Activated CD8-positive, alpha-beta T cell treated with anti-CD3 and anti-CD28 coated beads, Interleukin-2, amount 10 ng/mL, durations not matched to agents 7 days and 5 days (primary cell): ENCODE measurements at regions of chr7 and their contacts with region 1.

Region 1: GRCh38 chr7:65006094-65006992 is at the start of gene ERV3-1:
- DNase-seq: peak; percentile 97
- ATAC-seq: peak; percentile 100
- H3K4me3 Mint-ChIP-seq: peak within 1 kb of the TSS; percentile 93
- H3K27ac Mint-ChIP-seq: peak within 1 kb of the TSS; percentile 93
- H3K4me1 Mint-ChIP-seq: peaks cover 27% of the 10 kb centered on the region
- H3K27me3 Mint-ChIP-seq: no peaks in the 10 kb centered on the region
- total RNA-seq, gene ERV3-1: 12.5 to 14.8 TPM

Region 2: DNA sequence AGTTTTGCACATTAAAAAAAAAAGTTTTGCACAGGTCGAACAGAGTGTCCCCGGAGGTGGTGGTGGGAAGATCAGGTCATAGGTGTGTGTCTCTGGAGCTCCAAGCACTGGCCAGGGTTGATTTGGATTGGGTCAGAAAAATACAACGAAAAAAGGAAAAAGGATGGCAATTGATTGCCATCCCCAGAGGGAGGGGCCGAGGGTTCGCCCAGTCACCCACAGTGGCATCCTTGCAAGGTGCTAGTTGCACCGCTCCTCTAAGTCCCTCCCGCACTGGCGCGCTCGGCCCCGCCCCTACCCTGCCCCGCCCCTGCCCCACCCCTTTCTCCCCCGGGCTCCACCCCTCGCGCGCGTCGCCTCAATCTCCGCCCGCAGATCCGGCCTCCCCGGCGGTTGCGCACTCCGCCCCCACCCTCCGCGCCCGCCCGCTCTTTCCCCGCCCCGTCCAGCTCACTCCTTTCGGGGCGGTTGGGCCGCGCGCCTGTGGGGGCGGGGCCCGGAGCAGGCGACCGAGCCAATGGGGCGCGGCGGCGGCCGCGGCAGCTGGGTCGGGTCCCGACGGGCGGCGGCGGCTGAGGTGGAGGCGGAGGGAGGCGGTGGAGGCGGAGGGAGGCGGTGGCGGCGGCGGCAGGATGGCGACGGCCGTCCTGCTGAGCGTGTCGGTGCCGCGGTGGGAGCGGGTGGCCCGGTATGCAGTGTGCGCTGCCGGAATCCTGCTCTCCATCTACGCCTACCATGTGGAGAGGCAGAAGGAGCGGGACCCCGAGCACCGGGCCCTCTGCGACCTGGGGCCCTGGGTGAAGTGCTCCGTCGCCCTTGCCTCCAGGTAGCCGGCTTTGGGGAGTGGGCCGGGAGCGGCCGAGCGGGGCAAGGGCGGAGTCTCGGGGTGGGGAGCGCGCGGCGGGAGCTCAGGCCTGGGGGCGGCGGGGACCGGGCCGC is 31.7 kb after region 1 on chr7:
- CTCF ChIA-PET with region 1: no interaction called
- POLR2A ChIA-PET with region 1: interaction called, 20 read pairs
- DNase-seq: peak; percentile 92
- ATAC-seq: peak; percentile 91
- H3K4me3 Mint-ChIP-seq: peak overlapping the region; percentile 71
- H3K27ac Mint-ChIP-seq: peak overlapping the region; percentile 87
- H3K4me1 Mint-ChIP-seq: peaks cover 17% of the 10 kb centered on the region
- H3K27me3 Mint-ChIP-seq: no peaks in the 10 kb centered on the region